WTC11 (cell line): ENCODE measurements at regions of chr14 and their contacts with region 1.

Region 1: GRCh38 chr14:65434214-65434850 is 21.8 kb downstream of the FUT8 start:
- DNase-seq: no peak
- ATAC-seq: peak; percentile 85
- H3K4me3 Mint-ChIP-seq: no peak overlapping the region
- H3K27ac Mint-ChIP-seq: 0 out of 2 replicates have a peak overlapping the region, but pooled peaks have one; percentile 6
- H3K4me1 Mint-ChIP-seq: peaks cover 43% of the 10 kb centered on the region
- H3K27me3 Mint-ChIP-seq: no peaks in the 10 kb centered on the region; the same call in 1 of the 2 replicates
- CTCF ChIP-seq: no peak

Region 2: DNA sequence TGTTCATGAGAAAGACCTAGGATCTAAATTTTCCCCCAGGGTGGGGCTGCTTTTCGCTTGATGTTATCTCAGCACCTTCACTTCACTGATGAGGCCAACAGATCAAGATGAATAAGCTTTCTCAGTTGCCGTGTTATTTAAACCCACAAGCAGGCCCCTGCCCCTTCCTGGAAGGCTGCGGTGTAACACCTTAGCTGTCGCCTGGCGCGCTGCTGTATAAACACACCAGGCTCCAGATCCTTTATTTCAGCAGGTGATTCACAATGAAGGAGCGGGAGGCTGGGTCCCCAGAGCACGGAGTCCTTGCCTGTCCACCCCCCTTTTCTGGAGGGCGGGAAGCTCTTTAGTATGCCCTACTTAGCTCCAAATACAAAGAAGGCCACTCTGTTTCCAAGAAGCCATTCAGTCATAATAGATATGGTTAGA is 493.6 kb after region 1 on chr14:
- CTCF ChIA-PET with region 1: no interaction called
- POLR2A ChIA-PET with region 1: interaction called, 12 read pairs
- DNase-seq: peak; percentile 24
- ATAC-seq: peak; percentile 45
- H3K4me3 Mint-ChIP-seq: no peak overlapping the region
- H3K27ac Mint-ChIP-seq: 0 out of 2 replicates have a peak overlapping the region, but pooled peaks have one; percentile 77
- H3K4me1 Mint-ChIP-seq: peaks cover 47% of the 10 kb centered on the region
- H3K27me3 Mint-ChIP-seq: no peaks in the 10 kb centered on the region
- CTCF ChIP-seq: no peak